CD8-positive, alpha-beta memory T cell (primary cell): ENCODE measurements at regions of chr2 and their contacts with region 1.

Region 1: GRCh38 chr2:112718916-112719315 is 1.9 kb upstream of the NT5DC4 start:
- DNase-seq: no peak
- H3K4me3 ChIP-seq: no peak overlapping the region
- H3K4me3 Mint-ChIP-seq: no peak overlapping the region
- H3K27ac ChIP-seq: no peak overlapping the region
- H3K27ac Mint-ChIP-seq: no peak overlapping the region
- H3K4me1 ChIP-seq: no peaks in the 10 kb centered on the region
- H3K4me1 Mint-ChIP-seq: peaks cover 0 to 3% (median 0%) of the 10 kb centered on the region in 3 donors
- H3K27me3 ChIP-seq: no peaks in the 10 kb centered on the region
- H3K27me3 Mint-ChIP-seq: peaks cover 1 to 4% of the 10 kb centered on the region in 2 donors

Region 2: DNA sequence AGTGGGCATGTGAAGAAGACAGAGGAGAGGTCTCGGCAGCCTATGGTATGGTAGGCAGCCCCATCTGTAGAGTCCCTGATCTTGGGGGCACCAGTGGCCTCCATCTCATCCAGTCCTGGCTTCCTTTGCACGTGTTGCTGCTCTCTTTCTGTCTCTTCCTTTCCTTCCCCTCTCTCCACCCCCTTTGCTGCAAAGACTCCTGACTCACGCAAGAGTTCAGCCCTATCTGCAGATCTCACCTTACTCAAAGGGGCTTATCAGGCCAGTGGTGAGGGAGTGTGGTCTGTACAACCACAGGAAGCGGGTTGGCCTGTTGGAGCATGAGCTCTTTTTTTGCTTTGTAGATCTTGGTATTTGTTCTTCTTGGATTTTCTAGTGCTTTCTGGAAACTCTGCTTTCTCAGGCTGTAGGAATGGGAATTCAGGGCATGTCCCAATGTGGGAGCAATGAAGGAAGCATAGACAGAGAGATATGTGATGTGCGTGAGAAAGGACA is 12.7 kb before region 1 on chr2:
- CTCF ChIA-PET with region 1: no interaction called
- POLR2A ChIA-PET with region 1: interaction called, 11 read pairs
- DNase-seq: peak in 4 of 5 donors; percentile 45 to 71 (median 60)
- H3K4me3 ChIP-seq: no peak overlapping the region
- H3K4me3 Mint-ChIP-seq: peak overlapping the region in 6 of 7 donors; percentile 1 to 70 (median 49)
- H3K27ac ChIP-seq: no peak overlapping the region
- H3K27ac Mint-ChIP-seq: peak overlapping the region in 6 of 8 donors; percentile 16 to 58 (median 40)
- H3K4me1 ChIP-seq: peaks cover 16% of the 10 kb centered on the region
- H3K4me1 Mint-ChIP-seq: peaks cover 37 to 49% (median 39%) of the 10 kb centered on the region in 3 donors
- H3K27me3 ChIP-seq: no peaks in the 10 kb centered on the region
- H3K27me3 Mint-ChIP-seq: peaks cover 2 to 11% of the 10 kb centered on the region in 2 donors